GM23248 (cell line): ENCODE measurements at regions of chr18 and their contacts with region 1.

Region 1: DNA sequence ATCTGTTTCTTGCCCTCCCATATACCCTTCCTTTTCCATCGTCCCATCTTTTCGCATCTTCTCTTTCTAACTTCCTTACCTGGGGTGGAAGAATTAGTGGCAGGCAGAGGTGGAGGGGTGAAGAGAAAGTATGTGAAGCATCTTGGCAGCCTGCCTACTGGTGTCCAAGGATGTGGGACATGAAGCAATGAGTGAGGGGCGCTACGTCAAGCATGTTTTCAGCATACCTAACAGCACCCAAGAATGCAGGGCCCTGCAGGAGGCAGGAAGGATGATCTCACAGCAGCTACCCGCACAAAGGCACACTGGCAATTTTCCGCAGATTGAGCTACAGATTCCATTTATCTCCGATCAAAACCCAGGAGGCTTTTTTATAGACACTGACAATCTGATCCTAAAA is 42.2 kb downstream of the METTL4 start:
- DNase-seq: no peak
- H3K4me3 ChIP-seq: no peak overlapping the region
- H3K27ac ChIP-seq: no peak overlapping the region
- H3K4me1 ChIP-seq: no peaks in the 10 kb centered on the region
- H3K27me3 ChIP-seq: no peaks in the 10 kb centered on the region

Region 2: GRCh38 chr18:2392446-2392845 is 136.7 kb before region 1 on chr18:
- in situ Hi-C with region 1: no loop called
- DNase-seq: no peak
- H3K4me3 ChIP-seq: no peak overlapping the region
- H3K27ac ChIP-seq: no peak overlapping the region
- H3K4me1 ChIP-seq: no peaks in the 10 kb centered on the region
- H3K27me3 ChIP-seq: no peaks in the 10 kb centered on the region

Region 3: GRCh38 chr18:2459886-2460285 is 69.3 kb before region 1 on chr18:
- in situ Hi-C with region 1: loop called (anchors 10 kb)
- DNase-seq: peak; percentile 26
- H3K4me3 ChIP-seq: no peak overlapping the region
- H3K27ac ChIP-seq: no peak overlapping the region
- H3K4me1 ChIP-seq: no peaks in the 10 kb centered on the region
- H3K27me3 ChIP-seq: no peaks in the 10 kb centered on the region

Region 4: GRCh38 chr18:2706903-2707302 is 177.7 kb after region 1 on chr18:
- in situ Hi-C with region 1: no loop called
- DNase-seq: no peak
- H3K4me3 ChIP-seq: no peak overlapping the region
- H3K27ac ChIP-seq: no peak overlapping the region
- H3K4me1 ChIP-seq: peaks cover 8% of the 10 kb centered on the region; the same call in 1 of the 2 replicates
- H3K27me3 ChIP-seq: no peaks in the 10 kb centered on the region

Region 5: GRCh38 chr18:2758309-2758708 is 229.2 kb after region 1 on chr18:
- in situ Hi-C with region 1: no loop called
- DNase-seq: no peak
- H3K4me3 ChIP-seq: no peak overlapping the region
- H3K27ac ChIP-seq: no peak overlapping the region
- H3K4me1 ChIP-seq: no peaks in the 10 kb centered on the region
- H3K27me3 ChIP-seq: no peaks in the 10 kb centered on the region